Calu3 (cell line): ENCODE measurements at regions of chr17 and their contacts with region 1.

Region 1: GRCh38 chr17:39952680-39953470 is 9.9 kb upstream of the GSDMA start:
- DNase-seq: peak; percentile 100
- H3K4me3 Mint-ChIP-seq: peak overlapping the region; percentile 58
- H3K27ac Mint-ChIP-seq: peak overlapping the region; percentile 18
- H3K4me1 Mint-ChIP-seq: peaks cover 42% of the 10 kb centered on the region
- H3K27me3 Mint-ChIP-seq: peaks cover 15% of the 10 kb centered on the region
- CTCF ChIP-seq: no peak

Region 2: GRCh38 chr17:39722965-39723848 is 229.7 kb before region 1 on chr17:
- CTCF ChIA-PET with region 1: interaction called, 1,335 read pairs
- intact Hi-C with region 1: no loop called
- DNase-seq: peak; percentile 75
- H3K4me3 Mint-ChIP-seq: peak overlapping the region; percentile 0
- H3K27ac Mint-ChIP-seq: peak overlapping the region; percentile 28
- H3K4me1 Mint-ChIP-seq: peaks cover 38% of the 10 kb centered on the region
- H3K27me3 Mint-ChIP-seq: no peaks in the 10 kb centered on the region
- CTCF ChIP-seq: no peak

Region 3: GRCh38 chr17:39852239-39852638 is 100.6 kb before region 1 on chr17:
- CTCF ChIA-PET with region 1: interaction called, 1,809 read pairs
- intact Hi-C with region 1: no loop called
- DNase-seq: peak; percentile 59
- H3K4me3 Mint-ChIP-seq: no peak overlapping the region
- H3K27ac Mint-ChIP-seq: no peak overlapping the region
- H3K4me1 Mint-ChIP-seq: peaks cover 10% of the 10 kb centered on the region
- H3K27me3 Mint-ChIP-seq: no peaks in the 10 kb centered on the region
- CTCF ChIP-seq: no peak

Region 4: GRCh38 chr17:40086150-40087044 is 133.5 kb after region 1 on chr17:
- CTCF ChIA-PET with region 1: interaction called, 13 read pairs
- intact Hi-C with region 1: no loop called
- DNase-seq: peak; percentile 100
- H3K4me3 Mint-ChIP-seq: no peak overlapping the region
- H3K27ac Mint-ChIP-seq: no peak overlapping the region
- H3K4me1 Mint-ChIP-seq: no peaks in the 10 kb centered on the region
- H3K27me3 Mint-ChIP-seq: no peaks in the 10 kb centered on the region
- CTCF ChIP-seq: no peak

Region 5: GRCh38 chr17:40536295-40537171 is 583.7 kb after region 1 on chr17:
- CTCF ChIA-PET with region 1: interaction called, 16 read pairs
- intact Hi-C with region 1: no loop called
- DNase-seq: peak; percentile 68
- H3K4me3 Mint-ChIP-seq: no peak overlapping the region
- H3K27ac Mint-ChIP-seq: no peak overlapping the region
- H3K4me1 Mint-ChIP-seq: peaks cover 24% of the 10 kb centered on the region
- H3K27me3 Mint-ChIP-seq: peaks cover 85% of the 10 kb centered on the region
- CTCF ChIP-seq: no peak